WTC11 (cell line): ENCODE measurements at regions of chr2 and their contacts with region 1.

Region 1: GRCh38 chr2:86087936-86088850 is 17.5 kb downstream of the POLR1A start:
- DNase-seq: no peak
- ATAC-seq: peak; percentile 68
- H3K4me3 Mint-ChIP-seq: no peak overlapping the region
- H3K27ac Mint-ChIP-seq: no peak overlapping the region
- H3K4me1 Mint-ChIP-seq: no peaks in the 10 kb centered on the region
- H3K27me3 Mint-ChIP-seq: no peaks in the 10 kb centered on the region
- CTCF ChIP-seq: peak; percentile 35; the same call in 1 of the 2 replicates

Region 2: GRCh38 chr2:85999061-85999831 is 88.9 kb before region 1 on chr2:
- CTCF ChIA-PET with region 1: no interaction called
- POLR2A ChIA-PET with region 1: no interaction called
- DNase-seq: no peak
- ATAC-seq: no peak
- H3K4me3 Mint-ChIP-seq: no peak overlapping the region
- H3K27ac Mint-ChIP-seq: no peak overlapping the region
- H3K4me1 Mint-ChIP-seq: peaks cover 7% of the 10 kb centered on the region
- H3K27me3 Mint-ChIP-seq: no peaks in the 10 kb centered on the region; the same call in 1 of the 2 replicates
- CTCF ChIP-seq: no peak

Region 3: GRCh38 chr2:86105252-86105968 is 17.2 kb after region 1 on chr2 and contains the start of gene POLR1A:
- CTCF ChIA-PET with region 1: interaction called, 24 read pairs
- POLR2A ChIA-PET with region 1: no interaction called
- DNase-seq: peak; percentile 86
- ATAC-seq: peak; percentile 96
- H3K4me3 Mint-ChIP-seq: peak within 1 kb of the TSS; percentile 97
- H3K27ac Mint-ChIP-seq: peak within 1 kb of the TSS; percentile 100
- H3K4me1 Mint-ChIP-seq: peaks cover 25% of the 10 kb centered on the region
- H3K27me3 Mint-ChIP-seq: no peaks in the 10 kb centered on the region
- CTCF ChIP-seq: no peak
- total RNA-seq, gene POLR1A: 39.4 to 47.5 TPM (median 40.1 TPM) in 3 replicates